HAP-1 (cell line): ENCODE measurements at regions of chr9 and their contacts with region 1.

Region 1: DNA sequence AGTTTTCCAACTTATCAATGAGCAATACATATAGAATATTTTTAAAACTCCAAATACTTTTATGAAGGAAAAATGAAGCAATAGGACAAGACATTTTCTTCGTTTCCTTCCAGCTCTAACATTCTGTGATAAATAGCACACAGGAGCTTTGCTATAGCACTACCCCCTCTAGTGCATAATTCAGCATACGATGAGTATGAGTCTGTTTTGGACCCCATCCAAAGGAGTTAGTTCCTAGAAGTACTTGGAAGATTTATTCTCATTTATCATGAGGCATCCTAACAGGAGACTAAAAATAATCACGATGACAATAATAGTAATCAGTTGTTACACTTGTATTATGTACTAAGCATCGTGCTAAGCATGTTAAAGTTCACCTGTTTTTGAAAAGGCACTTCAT is 1061.3 kb upstream of the DMAC1 start:
- DNase-seq: no peak
- H3K4me3 ChIP-seq: no peak overlapping the region
- H3K4me1 ChIP-seq: peaks cover 11% of the 10 kb centered on the region
- H3K27me3 ChIP-seq: no peaks in the 10 kb centered on the region

Region 2: GRCh38 chr9:8521112-8521511 is 339.8 kb before region 1 on chr9:
- in situ Hi-C with region 1: loop called (anchors 10 kb)
- DNase-seq: no peak
- H3K4me3 ChIP-seq: no peak overlapping the region
- H3K4me1 ChIP-seq: no peaks in the 10 kb centered on the region
- H3K27me3 ChIP-seq: no peaks in the 10 kb centered on the region; the same call in 1 of the 2 replicates

Region 3: DNA sequence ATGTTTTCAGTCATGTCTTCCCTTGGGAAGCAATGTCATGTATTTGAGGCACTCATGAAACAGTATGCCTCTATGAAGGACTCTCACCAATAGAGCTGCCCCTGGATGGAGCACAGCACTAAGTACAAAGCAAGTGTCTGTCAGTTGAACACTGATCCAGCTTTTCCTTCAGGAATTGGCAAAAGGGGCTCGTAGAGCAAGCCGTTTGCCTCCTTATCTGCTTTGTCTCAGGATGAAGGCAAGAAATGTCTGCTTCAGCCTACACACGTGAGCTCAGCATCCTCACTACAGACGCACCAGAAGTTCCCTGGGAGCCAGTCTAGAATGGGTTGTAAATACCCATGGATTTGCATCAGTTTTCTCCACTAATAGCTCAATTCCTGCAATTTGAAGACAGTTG is 318.4 kb before region 1 on chr9:
- in situ Hi-C with region 1: no loop called
- DNase-seq: no peak
- H3K4me3 ChIP-seq: no peak overlapping the region
- H3K4me1 ChIP-seq: peaks cover 7% of the 10 kb centered on the region
- H3K27me3 ChIP-seq: no peaks in the 10 kb centered on the region

Region 4: DNA sequence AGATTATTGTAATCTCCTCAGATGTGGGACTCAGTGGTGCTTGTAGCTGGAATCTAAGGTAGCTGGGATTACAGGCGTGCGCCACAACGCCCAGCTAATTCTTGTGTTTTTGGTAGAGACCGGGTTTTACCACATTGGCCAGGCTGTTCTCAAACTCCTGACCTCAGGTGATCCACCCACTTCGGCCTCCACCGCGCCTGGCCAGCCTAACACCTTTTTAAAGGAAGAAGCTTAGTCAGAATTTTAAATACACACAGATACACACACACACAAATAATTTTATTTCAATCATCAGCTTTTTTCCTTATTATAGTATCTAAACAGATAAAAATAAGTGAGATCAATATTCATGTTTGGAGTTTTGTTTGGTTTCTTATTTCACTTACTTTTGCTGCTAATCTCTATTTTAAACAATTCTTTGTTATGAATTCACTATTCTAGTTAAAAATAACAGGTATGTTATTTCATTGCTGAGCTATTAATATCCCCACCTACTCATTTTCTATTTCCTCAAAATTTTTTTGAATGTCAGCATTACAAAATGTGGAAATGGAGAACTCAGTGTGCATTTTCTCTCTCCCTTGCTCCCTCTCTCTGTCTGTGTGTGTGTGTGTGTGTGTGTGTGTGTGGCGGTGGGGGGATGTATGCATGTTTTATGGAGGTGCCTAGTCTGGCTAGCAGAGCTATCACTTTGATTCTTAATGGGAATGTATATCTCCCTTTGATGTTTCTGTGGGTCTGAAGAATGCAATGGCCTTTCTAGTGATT is 100.7 kb before region 1 on chr9:
- in situ Hi-C with region 1: no loop called
- DNase-seq: no peak
- H3K4me3 ChIP-seq: no peak overlapping the region
- H3K4me1 ChIP-seq: peaks cover 5% of the 10 kb centered on the region
- H3K27me3 ChIP-seq: no peaks in the 10 kb centered on the region

Region 5: DNA sequence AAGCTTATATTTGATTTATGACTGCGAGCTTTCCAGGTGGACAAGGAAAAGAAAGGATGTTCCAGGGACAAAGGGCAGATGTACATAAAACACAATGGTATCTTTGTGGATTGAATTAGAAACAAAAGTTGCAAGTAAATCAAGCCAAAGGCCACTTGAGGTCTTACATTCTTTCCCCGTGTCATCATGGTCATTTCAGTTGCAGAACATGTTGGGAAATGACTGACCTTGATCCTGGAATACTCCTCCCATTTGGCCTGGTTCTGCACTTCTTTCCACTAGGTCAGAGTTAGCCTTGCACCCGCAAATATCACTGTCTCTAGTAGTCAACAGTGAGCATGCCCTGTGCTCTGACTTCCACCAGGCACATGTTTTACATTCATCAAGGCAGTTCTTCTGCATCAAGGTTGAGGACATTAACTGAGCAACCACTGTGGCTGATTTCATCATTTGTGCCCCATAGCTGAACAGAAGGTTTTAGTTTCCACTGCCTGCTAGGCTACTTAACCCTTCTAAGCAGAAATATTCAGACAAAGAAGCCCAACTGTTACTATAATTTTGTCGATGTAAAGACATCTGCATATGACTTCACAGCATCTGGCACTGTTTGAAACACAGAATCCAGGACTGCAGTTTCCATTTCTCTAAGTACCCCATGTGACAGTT is 100.4 kb after region 1 on chr9:
- in situ Hi-C with region 1: no loop called
- DNase-seq: no peak
- H3K4me3 ChIP-seq: no peak overlapping the region
- H3K4me1 ChIP-seq: no peaks in the 10 kb centered on the region
- H3K27me3 ChIP-seq: no peaks in the 10 kb centered on the region